ENCODE measurements at regions of chr6 and their contacts with region 1.

Region 1: DNA sequence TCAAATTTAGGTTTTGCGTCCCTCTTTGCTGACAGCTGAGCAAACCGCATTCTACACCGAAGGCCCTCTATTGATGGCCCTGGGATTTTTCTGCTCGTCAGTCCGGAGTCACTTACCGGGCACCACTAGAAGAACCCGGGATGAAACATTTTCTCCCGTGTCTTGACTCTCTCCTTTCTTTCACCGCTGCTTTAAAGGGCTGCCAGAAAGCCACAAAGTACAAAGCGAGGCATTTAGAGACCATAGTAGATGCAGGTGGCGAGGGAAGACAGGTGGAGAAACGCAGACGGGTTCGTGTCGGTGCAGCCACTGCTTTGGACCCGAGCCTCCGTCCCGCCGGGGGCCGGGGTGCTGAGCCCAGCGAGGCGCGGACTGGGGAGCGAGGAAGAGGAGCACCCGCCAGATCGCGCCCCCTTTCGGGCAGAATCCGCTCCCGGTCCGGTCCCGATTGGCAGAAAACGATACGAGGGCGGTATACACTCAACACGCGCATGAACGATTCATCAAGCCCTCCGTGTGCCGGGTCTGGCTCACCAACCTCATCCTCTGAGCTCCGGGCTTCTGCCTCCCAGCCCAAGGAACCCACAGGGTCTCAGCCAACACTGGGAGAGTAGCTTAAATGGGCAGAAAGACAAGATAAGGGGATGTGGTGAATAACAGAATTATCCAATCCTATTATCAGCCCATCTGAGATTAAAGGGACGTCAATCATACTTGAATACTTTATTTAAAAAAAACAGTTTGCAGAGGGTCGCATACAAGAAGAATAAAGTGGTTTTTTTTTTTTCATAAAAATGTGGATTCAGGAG is 84.9 kb downstream of the TRIM27 start:
- DNase-seq: peak; percentile 30 to 88
- H3K4me3 ChIP-seq: peak overlapping the region; percentile 70 to 86
- H3K27ac ChIP-seq: peak overlapping the region; percentile 62 to 68
- H3K4me1 ChIP-seq: peaks cover 0 to 6% of the 10 kb centered on the region in 2 donors
- H3K27me3 ChIP-seq: no peaks in the 10 kb centered on the region
- CTCF ChIP-seq: peak; percentile 36 to 60 (median 55)

Region 2: GRCh38 chr6:28863604-28864320 is 24.9 kb after region 1 on chr6:
- intact Hi-C with region 1: loop called (anchors 1 kb)
- DNase-seq: peak in 1 of 2 donors; percentile 86
- H3K4me3 ChIP-seq: peak overlapping the region; percentile 66 to 81
- H3K27ac ChIP-seq: peak overlapping the region; percentile 59 to 78
- H3K4me1 ChIP-seq: peaks cover 0 to 3% of the 10 kb centered on the region in 2 donors
- H3K27me3 ChIP-seq: no peaks in the 10 kb centered on the region
- CTCF ChIP-seq: no peak

Region 3: DNA sequence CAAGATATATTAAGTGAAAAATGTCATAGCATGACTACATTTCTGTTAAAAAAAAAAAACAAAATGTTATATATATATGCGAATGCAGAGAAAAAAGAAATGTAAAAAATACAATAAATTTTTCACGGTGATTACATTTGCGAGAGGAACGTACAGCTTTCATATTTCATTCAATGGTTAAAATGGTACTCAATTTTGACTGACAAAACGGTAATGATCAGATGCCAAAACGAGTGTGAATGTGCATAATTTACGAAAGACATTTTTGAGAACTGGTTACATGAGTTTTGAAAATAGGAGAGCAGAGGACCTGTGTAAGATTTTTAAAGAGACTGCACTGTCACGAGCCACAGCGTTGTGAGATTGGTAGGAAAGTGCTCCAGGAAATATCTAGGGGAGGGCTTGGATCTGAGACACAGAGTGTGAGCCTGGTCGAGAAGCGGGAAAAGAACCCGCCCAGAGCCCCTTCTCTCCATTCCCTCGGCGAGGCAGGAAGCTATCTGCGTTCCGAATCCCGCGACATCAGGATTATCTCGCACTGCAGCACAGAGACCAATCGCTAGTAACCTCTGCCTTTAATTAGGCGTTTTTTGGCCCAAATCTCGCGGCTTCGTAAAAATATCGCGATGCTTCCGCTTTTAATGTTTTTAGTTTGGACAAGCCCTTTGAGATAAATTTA is 56.4 kb after region 1 on chr6:
- intact Hi-C with region 1: loop called (anchors 1 kb)
- DNase-seq: peak; percentile 86 to 98
- H3K4me3 ChIP-seq: peak overlapping the region; percentile 60 to 72
- H3K27ac ChIP-seq: peak overlapping the region; percentile 95 to 96
- H3K4me1 ChIP-seq: no peaks in the 10 kb centered on the region
- H3K27me3 ChIP-seq: no peaks in the 10 kb centered on the region
- CTCF ChIP-seq: no peak

Region 4: DNA sequence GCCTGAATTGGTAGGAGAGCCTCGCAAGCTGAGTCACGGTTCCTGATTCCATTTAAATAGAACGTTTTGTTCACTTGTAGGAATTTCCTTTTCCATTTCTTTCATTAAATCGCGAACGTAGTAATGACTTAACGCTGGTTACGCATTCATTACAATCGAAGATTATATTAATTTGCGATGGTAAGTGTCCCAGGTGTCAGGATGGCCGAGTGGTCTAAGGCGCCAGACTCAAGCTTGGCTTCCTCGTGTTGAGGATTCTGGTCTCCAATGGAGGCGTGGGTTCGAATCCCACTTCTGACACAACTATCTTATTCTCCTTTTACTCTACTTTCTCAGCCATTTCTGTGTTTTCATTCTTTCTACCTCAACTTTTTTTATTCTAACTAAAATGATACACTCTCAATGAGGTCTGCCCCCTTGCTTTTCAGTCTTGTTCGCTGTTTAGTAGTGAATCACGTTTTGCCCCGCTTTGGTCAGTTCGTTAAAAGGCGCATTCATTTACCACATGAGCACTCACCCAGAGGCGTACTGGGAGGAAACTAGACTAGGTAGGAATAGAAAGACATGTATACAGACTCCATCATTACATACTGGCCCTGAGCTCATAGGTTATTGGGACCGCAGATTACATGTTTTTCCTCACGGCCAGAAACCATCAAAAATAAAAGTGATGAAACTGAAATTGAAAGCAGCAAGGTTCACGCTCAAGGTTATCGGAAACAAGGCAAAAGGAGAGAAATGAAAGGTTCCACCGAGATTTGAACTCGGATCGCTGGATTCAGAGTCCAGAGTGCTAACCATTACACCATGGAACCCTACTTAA is 102.2 kb after region 1 on chr6:
- intact Hi-C with region 1: loop called (anchors 2 kb)
- DNase-seq: peak; percentile 31 to 89
- H3K4me3 ChIP-seq: peak overlapping the region; percentile 77 to 81
- H3K27ac ChIP-seq: peak overlapping the region; percentile 89 to 91
- H3K4me1 ChIP-seq: no peaks in the 10 kb centered on the region
- H3K27me3 ChIP-seq: no peaks in the 10 kb centered on the region
- CTCF ChIP-seq: no peak

Region 5: GRCh38 chr6:29028821-29029220 is 190.0 kb after region 1 on chr6:
- intact Hi-C with region 1: loop called (anchors 5 kb)
- DNase-seq: no peak
- H3K4me3 ChIP-seq: no peak overlapping the region
- H3K27ac ChIP-seq: no peak overlapping the region
- H3K4me1 ChIP-seq: no peaks in the 10 kb centered on the region
- H3K27me3 ChIP-seq: no peaks in the 10 kb centered on the region
- CTCF ChIP-seq: no peak